GM10248 (cell line): ENCODE measurements at regions of chr19 and their contacts with region 1.

Region 1: DNA sequence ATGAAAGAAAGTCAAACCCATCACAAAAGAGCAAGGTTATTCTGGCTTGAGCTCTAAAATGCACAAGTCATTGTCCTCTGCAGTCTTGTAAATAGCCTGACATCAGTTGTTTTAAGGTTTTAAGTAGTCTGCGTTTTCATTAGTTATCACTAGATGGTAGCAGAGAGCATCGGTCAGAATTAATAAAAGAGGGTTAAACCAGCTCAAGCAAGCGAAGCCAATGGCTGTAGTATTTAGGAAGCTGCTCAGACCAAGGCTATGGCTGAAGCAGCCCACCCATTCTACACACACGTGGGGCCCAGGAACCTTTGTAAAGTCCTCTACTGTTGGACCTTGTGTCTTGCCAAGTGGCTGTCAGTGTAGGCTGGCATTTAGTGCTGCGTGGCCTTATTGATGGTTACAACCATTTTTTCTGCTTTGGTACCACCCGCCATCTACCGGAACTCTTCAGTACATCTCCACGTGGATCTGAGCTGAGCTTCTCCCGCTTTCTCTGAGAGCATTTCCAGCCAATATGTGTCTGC is 13.3 kb upstream of the ZNF57 start:
- DNase-seq: peak; percentile 70
- CTCF ChIP-seq: peak; percentile 62

Region 2: GRCh38 chr19:1364070-1364704 is 1523.3 kb before region 1 on chr19:
- CTCF ChIA-PET with region 1: no interaction called
- POLR2A ChIA-PET with region 1: no interaction called
- DNase-seq: peak; percentile 68
- CTCF ChIP-seq: peak; percentile 10

Region 3: DNA sequence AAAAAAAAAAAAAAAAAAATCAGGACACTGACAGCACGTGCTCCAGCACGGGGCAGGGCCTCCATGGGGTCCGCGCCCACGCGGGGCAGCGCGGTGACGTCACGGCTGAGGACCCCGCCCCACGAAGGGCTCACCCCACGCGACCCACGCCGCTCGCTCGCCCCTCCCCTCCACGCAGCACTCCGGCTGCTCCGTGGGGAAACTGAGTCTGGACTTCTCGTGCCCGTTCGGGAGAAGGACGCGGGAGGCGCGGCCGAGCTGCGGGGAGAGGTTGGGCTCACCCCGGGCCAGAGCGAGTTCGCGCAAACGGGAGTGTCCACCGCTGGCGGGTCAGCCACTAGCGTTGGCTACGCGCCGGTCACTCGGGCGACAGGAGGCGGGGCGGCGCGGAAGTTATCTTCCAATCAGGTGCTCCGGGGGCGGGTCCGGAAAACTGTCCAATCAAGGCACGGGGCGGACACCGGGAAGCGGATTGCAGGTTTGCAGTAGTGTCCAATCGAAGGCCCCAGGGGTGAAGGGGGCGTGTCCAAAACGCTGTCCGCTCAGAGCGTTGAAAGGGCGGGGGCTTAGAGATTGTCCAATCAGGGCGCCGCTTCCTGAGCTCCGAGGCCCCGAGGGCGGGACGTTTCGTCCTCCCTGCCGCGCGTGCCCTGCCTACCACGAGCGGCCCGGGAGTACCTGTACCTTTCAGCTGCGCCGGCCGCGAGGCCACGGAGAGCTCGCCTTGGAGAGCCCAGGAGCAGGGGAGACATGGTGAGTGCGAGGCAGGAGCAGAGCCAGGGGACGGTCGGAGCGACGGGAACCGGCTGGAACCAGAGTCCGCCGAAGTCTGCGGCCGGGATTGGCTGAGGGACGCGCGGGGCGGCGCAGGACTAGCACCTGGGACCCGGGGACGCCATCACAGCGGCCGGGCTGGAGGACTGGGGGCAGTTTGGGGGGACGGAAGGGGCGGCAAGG is 13.1 kb after region 1 on chr19 and contains the start of gene ZNF57:
- CTCF ChIA-PET with region 1: interaction called, 13 read pairs
- POLR2A ChIA-PET with region 1: no interaction called
- DNase-seq: peak; percentile 99
- CTCF ChIP-seq: no peak